CD8-positive, alpha-beta memory T cell (primary cell): ENCODE measurements at regions of chr2 and their contacts with region 1.

Region 1: DNA sequence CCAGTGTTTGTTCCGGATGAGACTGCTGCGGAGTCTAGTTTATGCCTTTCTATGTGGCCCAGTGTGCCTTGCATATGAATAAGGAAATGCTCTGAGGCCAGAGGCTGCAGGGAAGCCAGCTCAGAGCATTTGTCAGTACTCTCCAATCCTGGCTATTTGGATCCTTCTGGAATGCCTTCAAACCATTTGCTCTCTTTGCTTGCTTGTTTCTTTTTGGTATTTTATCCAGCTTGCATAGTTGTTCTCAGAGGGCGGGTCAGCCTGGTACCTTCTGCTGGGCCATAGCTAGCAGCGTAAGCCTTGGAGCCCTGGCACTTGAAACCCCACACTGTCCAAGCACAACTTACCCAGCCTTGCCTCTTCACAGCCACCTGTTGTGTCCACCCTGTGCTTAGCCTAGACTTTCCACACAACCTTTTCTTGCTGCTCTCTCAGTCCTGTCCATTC is 20.5 kb downstream of the CENPO start:
- DNase-seq: no peak
- H3K4me3 ChIP-seq: no peak overlapping the region
- H3K4me3 Mint-ChIP-seq: no peak overlapping the region
- H3K27ac ChIP-seq: no peak overlapping the region
- H3K27ac Mint-ChIP-seq: no peak overlapping the region
- H3K4me1 ChIP-seq: no peaks in the 10 kb centered on the region
- H3K4me1 Mint-ChIP-seq: peaks cover 6 to 18% (median 17%) of the 10 kb centered on the region in 3 donors
- H3K27me3 ChIP-seq: no peaks in the 10 kb centered on the region
- H3K27me3 Mint-ChIP-seq: no peaks in the 10 kb centered on the region

Region 2: GRCh38 chr2:24766609-24767008 is 47.1 kb before region 1 on chr2:
- CTCF ChIA-PET with region 1: no interaction called
- POLR2A ChIA-PET with region 1: interaction called, 12 read pairs
- DNase-seq: no peak
- H3K4me3 ChIP-seq: no peak overlapping the region
- H3K4me3 Mint-ChIP-seq: no peak overlapping the region
- H3K27ac ChIP-seq: no peak overlapping the region
- H3K27ac Mint-ChIP-seq: peak overlapping the region in 6 of 8 donors; percentile 0 to 90 (median 52)
- H3K4me1 ChIP-seq: no peaks in the 10 kb centered on the region
- H3K4me1 Mint-ChIP-seq: peaks cover 0 to 7% (median 6%) of the 10 kb centered on the region in 3 donors
- H3K27me3 ChIP-seq: no peaks in the 10 kb centered on the region
- H3K27me3 Mint-ChIP-seq: no peaks in the 10 kb centered on the region